ENCODE measurements at regions of chr9 and their contacts with region 1.

Region 1: GRCh38 chr9:35096035-35096849 is at the start of gene PIGO:
- DNase-seq: no peak
- H3K4me3 ChIP-seq: peak within 1 kb of the TSS; percentile 98
- H3K27me3 ChIP-seq: no peaks in the 10 kb centered on the region
- CTCF ChIP-seq: peak; percentile 94
- polyA plus RNA-seq, gene PIGO: 18.7 and 26.9 TPM in 2 replicates

Region 2: DNA sequence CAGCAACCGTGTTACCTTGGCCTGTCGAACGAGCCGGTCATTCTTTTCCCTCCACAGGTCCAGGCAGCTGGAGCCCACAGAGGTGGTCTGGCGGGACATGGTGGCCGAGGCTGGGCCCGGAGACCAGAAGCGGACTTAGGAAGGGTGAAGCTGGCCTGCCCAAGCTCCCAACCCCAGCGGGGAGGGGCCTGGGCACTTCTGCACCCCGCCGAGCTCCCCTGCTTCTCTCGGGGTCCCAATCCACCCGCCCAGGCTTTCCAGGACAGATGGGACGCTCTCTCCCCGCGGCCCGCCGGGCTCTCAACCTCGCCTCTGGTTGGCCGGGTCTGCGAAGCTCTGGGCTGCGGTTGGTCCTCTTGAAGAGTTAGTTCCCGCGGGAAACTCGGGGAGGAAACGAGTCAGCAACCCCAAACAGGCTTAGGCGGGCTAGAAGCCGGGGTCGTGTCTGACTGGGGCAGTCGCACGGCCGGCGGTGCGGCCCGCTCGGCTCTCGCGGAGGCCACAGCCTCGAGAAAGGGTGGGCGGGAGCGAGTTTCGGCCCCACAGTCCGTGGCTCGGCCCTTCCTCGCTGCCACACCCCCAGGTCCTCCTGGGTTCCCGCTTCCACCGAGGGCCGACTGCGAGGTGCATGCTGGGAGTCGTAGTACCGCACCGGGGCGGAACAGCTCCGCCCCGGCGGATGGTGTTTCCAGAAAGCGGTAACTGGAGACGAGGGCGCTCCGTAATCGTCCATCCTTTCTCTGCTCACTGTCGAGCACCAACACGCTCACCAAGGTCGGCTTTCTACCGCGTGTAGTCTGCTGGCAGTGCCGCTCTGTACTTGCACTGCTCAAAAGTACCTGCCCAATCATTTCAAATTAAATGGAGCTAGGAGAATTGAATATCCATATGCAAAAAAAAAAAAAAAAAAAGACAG is 16.6 kb before region 1 on chr9 and contains the start of gene FANCG:
- CTCF ChIA-PET with region 1: interaction called, 59 read pairs
- POLR2A ChIA-PET with region 1: no interaction called
- DNase-seq: peak; percentile 70
- H3K4me3 ChIP-seq: peak within 1 kb of the TSS; percentile 65
- H3K27me3 ChIP-seq: no peaks in the 10 kb centered on the region
- CTCF ChIP-seq: no peak
- polyA plus RNA-seq, gene FANCG: 11.9 and 13.6 TPM in 2 replicates

Region 3: GRCh38 chr9:35111001-35111933 is 15.0 kb after region 1 on chr9:
- CTCF ChIA-PET with region 1: interaction called, 12 read pairs
- POLR2A ChIA-PET with region 1: interaction called, 7 read pairs
- DNase-seq: peak; percentile 91
- H3K4me3 ChIP-seq: peak overlapping the region; percentile 78
- H3K27me3 ChIP-seq: no peaks in the 10 kb centered on the region
- CTCF ChIP-seq: no peak

Measured in BJ (cell line).